ENCODE measurements at regions of chr12 and their contacts with region 1.

Region 1: DNA sequence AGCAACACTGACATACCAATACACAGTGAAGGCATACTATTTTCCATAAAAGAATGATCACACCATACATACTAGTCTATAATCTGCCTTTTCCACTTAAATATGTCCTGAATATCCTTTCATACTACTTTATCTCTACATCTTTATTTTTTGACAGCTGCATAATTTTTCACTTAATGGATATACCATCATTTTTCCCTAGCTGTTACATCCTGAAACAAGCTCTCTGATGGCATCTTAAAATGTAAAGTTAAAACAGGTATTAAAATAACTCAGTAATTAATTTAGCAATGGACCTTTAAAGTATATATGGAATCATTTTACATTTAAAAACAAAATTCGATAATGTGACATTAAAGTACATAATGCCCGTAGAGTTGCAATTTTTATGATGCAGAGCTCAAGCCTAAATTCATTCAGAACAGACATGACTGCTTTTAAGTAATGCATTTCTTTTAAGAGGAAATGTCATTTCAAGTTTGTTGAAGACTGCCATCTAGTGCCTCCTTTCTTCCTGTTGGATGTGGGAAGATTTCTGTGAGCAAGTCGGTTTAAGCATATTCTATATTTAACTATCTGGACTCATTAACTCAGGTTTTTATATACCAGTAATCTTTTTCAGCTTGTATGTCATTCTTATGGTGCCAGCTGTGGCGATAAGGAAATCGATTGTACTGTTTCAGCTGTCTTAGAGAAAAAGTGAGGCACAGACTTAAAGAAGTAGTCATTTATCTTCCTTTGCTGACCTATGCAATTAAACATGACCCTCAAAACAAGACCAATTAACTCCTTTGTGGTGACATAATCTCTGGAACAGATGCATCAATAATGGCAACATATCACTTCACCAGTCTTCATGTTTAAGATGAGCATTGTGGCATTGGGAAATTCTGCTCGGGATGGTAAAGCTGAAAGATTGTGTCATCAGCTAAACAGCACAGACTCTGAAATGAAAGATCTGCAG is 20.3 kb downstream of the PRICKLE1 start:
- DNase-seq: peak in 2 of 4 experiments; percentile 19 to 61
- ATAC-seq: peak; percentile 82
- H3K4me3 ChIP-seq: no peak overlapping the region
- H3K27ac ChIP-seq: no peak overlapping the region
- H3K4me1 ChIP-seq: no peaks in the 10 kb centered on the region
- H3K27me3 ChIP-seq: peaks cover 0 to 4% of the 10 kb centered on the region in 2 experiments; a peak in 2 of 5 replicates
- CTCF ChIP-seq: peak; percentile 44 to 79 (median 56); a peak in 5 of 6 replicates
- EP300 ChIP-seq: no peak
- POLR2A ChIP-seq: no peak
- RAD21 ChIP-seq: peak; percentile 61 to 90

Region 2: DNA sequence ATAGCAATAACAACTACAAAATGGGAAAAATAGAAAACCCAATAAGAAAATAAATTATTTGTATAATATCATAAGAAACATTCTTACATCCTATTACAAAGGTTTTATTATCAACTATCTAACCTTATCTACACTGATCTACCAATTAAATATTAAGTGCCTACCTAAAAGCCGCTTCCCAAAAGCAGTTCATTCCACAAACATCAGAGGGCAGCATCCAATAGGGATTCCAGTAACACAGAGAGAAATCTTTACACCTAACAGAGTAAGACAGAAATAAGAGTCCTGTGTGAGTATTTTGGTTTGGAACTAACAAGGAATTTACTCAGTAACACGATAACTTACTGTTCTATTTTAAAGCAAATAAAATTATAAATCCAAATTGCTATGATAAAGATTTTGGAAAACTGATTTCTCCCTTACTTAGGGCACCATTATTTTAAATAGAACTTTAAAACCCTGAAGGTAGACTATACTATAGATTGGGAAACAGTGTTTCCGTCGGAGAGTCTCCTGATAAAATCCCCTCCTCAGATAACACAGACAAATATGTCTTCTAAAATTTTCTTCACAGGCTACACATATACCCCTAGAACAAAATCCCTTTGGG is 439.5 kb before region 1 on chr12:
- CTCF ChIA-PET with region 1: interaction called, 5 read pairs
- POLR2A ChIA-PET with region 1: no interaction called
- in situ Hi-C with region 1: loop called (anchors 25 kb)
- intact Hi-C with region 1: loop called (anchors 5 kb)
- DNase-seq: peak in 2 of 4 experiments; percentile 26 to 61
- ATAC-seq: peak; percentile 71
- H3K4me3 ChIP-seq: no peak overlapping the region
- H3K27ac ChIP-seq: no peak overlapping the region
- H3K4me1 ChIP-seq: peaks cover 0 to 2% of the 10 kb centered on the region in 2 experiments; a peak in 3 of 5 replicates
- H3K27me3 ChIP-seq: no peaks in the 10 kb centered on the region
- CTCF ChIP-seq: peak; percentile 61 to 79 (median 71); a peak in 5 of 6 replicates
- EP300 ChIP-seq: no peak
- POLR2A ChIP-seq: no peak
- RAD21 ChIP-seq: peak; percentile 89 to 93

Region 3: DNA sequence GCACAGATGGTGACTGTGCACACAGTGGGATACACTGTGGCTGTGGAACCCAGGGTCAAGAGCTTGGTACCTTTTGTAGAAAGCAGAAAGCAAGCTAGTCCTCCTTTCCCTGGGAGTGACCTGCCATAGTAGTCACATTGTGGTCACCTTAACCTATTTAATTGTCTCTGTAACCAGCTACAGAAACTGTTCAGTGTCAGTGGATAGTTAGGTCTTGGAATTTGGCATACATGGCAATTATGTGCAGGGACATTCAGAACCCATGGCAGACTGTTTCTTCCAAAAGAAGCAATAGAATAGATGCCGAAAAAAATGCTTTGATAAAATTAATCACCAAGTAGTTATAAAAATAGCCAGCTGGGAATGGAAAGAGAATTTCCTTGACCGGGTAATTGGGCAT is 212.9 kb before region 1 on chr12:
- CTCF ChIA-PET with region 1: no interaction called
- POLR2A ChIA-PET with region 1: no interaction called
- in situ Hi-C with region 1: loop called (anchors 10 kb)
- intact Hi-C with region 1: no loop called
- DNase-seq: no peak
- ATAC-seq: no peak
- H3K4me3 ChIP-seq: no peak overlapping the region
- H3K27ac ChIP-seq: no peak overlapping the region
- H3K4me1 ChIP-seq: no peaks in the 10 kb centered on the region
- H3K27me3 ChIP-seq: no peaks in the 10 kb centered on the region
- CTCF ChIP-seq: no peak
- EP300 ChIP-seq: no peak
- POLR2A ChIP-seq: no peak
- RAD21 ChIP-seq: no peak

Region 4: GRCh38 chr12:42372154-42372791 is 197.0 kb before region 1 on chr12:
- CTCF ChIA-PET with region 1: interaction called, 6 read pairs
- POLR2A ChIA-PET with region 1: no interaction called
- in situ Hi-C with region 1: no loop called
- intact Hi-C with region 1: loop called (anchors 2 kb)
- DNase-seq: peak; percentile 36 to 76 (median 46)
- ATAC-seq: peak; percentile 97
- H3K4me3 ChIP-seq: no peak overlapping the region
- H3K27ac ChIP-seq: no peak overlapping the region
- H3K4me1 ChIP-seq: no peaks in the 10 kb centered on the region
- H3K27me3 ChIP-seq: no peaks in the 10 kb centered on the region
- CTCF ChIP-seq: peak; percentile 72 to 89 (median 87)
- EP300 ChIP-seq: no peak
- POLR2A ChIP-seq: no peak
- RAD21 ChIP-seq: peak; percentile 83 to 92